CD4-positive, alpha-beta T cell (primary cell): ENCODE measurements at regions of chr10 and their contacts with region 1.

Region 1: DNA sequence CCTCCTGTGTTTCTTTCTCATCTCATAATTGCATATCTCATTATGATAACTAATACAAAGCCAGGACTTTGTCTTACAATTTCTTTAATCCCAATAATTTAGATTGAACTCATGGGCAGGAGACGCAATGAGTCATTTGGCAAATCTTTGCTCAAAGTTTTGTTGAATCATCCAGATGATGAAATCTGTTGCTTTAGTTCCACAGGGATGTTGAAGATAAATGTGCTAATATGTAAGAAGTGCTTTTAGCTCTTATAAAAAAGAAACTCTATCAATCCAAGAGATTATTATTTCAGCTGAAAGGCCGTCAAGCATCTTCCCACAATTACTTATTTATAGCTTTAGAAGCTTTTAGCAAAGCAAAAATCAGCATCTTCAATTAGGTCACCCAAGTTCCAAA is 36.7 kb upstream of the ANK3 start:
- DNase-seq: no peak
- ATAC-seq: no peak
- H3K4me3 ChIP-seq: no peak overlapping the region
- H3K4me3 Mint-ChIP-seq: no peak overlapping the region
- H3K27ac ChIP-seq: no peak overlapping the region
- H3K27ac Mint-ChIP-seq: no peak overlapping the region
- H3K4me1 ChIP-seq: no peaks in the 10 kb centered on the region
- H3K4me1 Mint-ChIP-seq: no peaks in the 10 kb centered on the region
- H3K27me3 ChIP-seq: no peaks in the 10 kb centered on the region
- H3K27me3 Mint-ChIP-seq: no peaks in the 10 kb centered on the region
- CTCF ChIP-seq: no peak

Region 2: GRCh38 chr10:59830601-59831259 is 595.7 kb before region 1 on chr10:
- CTCF ChIA-PET with region 1: no interaction called
- POLR2A ChIA-PET with region 1: no interaction called
- intact Hi-C with region 1: loop called in 1 of 2 experiments (anchors 5 kb)
- DNase-seq: peak in 4 of 14 experiments; percentile 14 to 45 (median 32)
- ATAC-seq: no peak
- H3K4me3 ChIP-seq: no peak overlapping the region
- H3K4me3 Mint-ChIP-seq: no peak overlapping the region
- H3K27ac ChIP-seq: no peak overlapping the region
- H3K27ac Mint-ChIP-seq: no peak overlapping the region
- H3K4me1 ChIP-seq: peaks cover 2% of the 10 kb centered on the region
- H3K4me1 Mint-ChIP-seq: peaks cover 51% of the 10 kb centered on the region
- H3K27me3 ChIP-seq: no peaks in the 10 kb centered on the region
- H3K27me3 Mint-ChIP-seq: no peaks in the 10 kb centered on the region
- CTCF ChIP-seq: peak; percentile 33